ENCODE measurements at regions of chr2 and their contacts with region 1.

Region 1: GRCh38 chr2:190880378-190881073 is at the start of gene GLS:
- DNase-seq: peak; percentile 98
- H3K4me3 Mint-ChIP-seq: peak within 1 kb of the TSS; percentile 98
- H3K27ac Mint-ChIP-seq: peak within 1 kb of the TSS; percentile 99
- H3K4me1 Mint-ChIP-seq: peaks cover 36% of the 10 kb centered on the region
- H3K27me3 Mint-ChIP-seq: peaks cover 4% of the 10 kb centered on the region
- total RNA-seq, gene GLS: 209 to 210 TPM

Region 2: DNA sequence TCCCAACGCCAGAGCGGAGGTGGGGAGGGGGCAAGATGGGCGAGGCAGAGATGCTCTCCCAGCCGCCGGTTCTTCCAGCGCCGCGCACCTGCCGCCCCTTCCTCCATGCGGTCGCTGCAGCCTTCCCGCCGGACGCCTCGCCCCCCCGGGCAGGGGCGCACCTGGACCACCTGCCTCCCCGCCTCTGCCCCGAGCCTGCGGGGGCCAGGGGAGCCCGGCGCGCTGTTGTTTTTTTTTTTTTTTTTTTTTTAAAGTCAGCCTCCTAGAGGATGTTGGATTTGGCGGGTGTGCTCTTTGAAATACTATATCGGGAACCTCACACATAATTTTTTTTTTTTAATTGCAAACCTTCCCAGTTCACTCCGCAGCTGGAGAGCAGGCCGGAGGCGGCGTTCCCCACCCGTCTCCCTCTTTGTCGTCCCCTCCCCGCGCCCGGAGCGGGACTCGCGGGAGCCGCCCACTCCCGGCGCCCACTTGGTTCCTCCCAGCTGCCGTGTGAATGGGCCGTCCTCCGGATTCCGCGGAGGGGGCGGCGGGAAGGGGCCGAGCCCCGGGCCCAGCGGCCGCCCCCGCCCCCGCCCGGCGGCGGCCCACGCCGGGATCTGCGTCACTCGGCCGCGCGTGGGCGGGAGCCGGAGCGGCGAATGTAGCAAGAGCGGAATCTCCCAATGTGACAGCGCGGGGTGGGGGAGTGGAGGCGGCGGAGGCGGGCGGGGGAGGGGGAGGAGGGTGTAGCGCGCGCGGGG is 232.1 kb before region 1 on chr2:
- CTCF ChIA-PET with region 1: no interaction called
- POLR2A ChIA-PET with region 1: interaction called, 3 read pairs
- intact Hi-C with region 1: loop called (anchors 1 kb)
- DNase-seq: peak; percentile 85
- H3K4me3 Mint-ChIP-seq: peak overlapping the region; percentile 75
- H3K27ac Mint-ChIP-seq: peak overlapping the region; percentile 82
- H3K4me1 Mint-ChIP-seq: peaks cover 38% of the 10 kb centered on the region
- H3K27me3 Mint-ChIP-seq: no peaks in the 10 kb centered on the region

Region 3: DNA sequence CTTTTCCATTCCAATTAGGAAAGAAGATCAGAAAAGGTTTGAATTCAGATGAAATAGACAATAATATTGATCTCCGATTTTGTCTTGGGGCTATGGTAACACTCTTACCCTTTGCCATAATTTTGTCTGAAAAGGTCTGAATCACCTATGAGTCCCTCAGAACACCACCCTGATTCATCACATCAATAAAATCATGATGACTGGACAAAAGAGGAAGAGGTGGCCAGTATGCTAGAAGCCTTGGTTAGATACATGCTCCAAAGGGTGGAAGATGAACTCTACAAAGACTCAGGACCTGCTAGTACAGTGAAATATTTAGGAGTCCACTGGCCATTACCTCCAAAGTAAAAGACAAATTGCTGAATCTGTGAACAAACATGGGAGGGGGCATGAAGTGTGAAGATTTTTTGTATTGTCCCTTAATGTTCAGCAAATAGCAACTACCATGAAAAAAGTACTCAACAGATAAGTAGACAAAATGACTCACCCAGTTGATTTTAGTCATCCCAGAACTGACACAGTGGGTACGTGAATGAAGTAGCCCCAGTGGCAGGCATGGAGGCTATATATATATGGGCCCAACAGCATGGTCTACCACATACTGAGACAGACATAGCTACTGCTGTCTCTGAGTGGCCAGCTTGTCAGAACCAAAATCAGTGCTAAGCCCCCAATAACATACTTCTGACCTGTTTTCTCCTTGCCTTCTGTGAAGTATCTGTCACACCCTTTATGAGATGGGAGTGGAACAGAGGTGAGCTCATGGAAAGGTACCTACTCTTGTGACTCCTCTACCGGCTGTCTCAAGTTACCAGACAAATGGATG is 36.4 kb before region 1 on chr2:
- CTCF ChIA-PET with region 1: no interaction called
- POLR2A ChIA-PET with region 1: interaction called, 22 read pairs
- intact Hi-C with region 1: loop called (anchors 1 kb)
- DNase-seq: peak; percentile 78
- H3K4me3 Mint-ChIP-seq: peak overlapping the region; percentile 30
- H3K27ac Mint-ChIP-seq: peak overlapping the region; percentile 92
- H3K4me1 Mint-ChIP-seq: peaks cover 39% of the 10 kb centered on the region
- H3K27me3 Mint-ChIP-seq: peaks cover 1% of the 10 kb centered on the region

Region 4: GRCh38 chr2:190911813-190912212 is 31.3 kb after region 1 on chr2:
- CTCF ChIA-PET with region 1: no interaction called
- POLR2A ChIA-PET with region 1: interaction called, 5 read pairs
- intact Hi-C with region 1: loop called (anchors 1 kb)
- DNase-seq: no peak
- H3K4me3 Mint-ChIP-seq: no peak overlapping the region
- H3K27ac Mint-ChIP-seq: peak overlapping the region; percentile 54
- H3K4me1 Mint-ChIP-seq: peaks cover 38% of the 10 kb centered on the region
- H3K27me3 Mint-ChIP-seq: no peaks in the 10 kb centered on the region

Region 5: GRCh38 chr2:191059308-191059707 is 178.8 kb after region 1 on chr2:
- CTCF ChIA-PET with region 1: no interaction called
- POLR2A ChIA-PET with region 1: no interaction called
- intact Hi-C with region 1: no loop called
- DNase-seq: no peak
- H3K4me3 Mint-ChIP-seq: no peak overlapping the region
- H3K27ac Mint-ChIP-seq: peak overlapping the region; percentile 10
- H3K4me1 Mint-ChIP-seq: peaks cover 68% of the 10 kb centered on the region
- H3K27me3 Mint-ChIP-seq: no peaks in the 10 kb centered on the region

Region 6: DNA sequence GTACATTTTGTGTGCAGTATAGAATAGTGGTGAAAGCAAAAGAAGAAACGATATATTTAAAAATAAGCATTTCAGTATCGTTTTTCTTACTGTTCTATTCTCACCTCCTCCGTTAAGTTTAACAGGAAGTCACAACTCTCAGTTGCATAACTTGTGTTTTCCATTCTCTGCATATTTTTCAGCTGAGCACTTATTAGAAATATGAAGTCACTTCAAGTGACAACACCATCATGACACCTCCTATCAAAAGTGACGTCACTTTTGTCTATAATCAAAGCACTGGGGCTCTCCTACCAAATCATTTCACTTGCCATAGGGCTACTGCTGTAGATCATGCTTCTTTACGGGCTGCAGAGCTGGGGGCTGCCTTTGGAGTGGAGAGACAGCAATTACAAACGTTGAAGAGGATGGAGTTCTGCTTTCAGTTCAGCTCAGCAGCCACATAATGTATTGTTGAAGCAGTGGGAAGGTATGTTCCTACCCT is 233.9 kb after region 1 on chr2:
- CTCF ChIA-PET with region 1: no interaction called
- POLR2A ChIA-PET with region 1: interaction called, 3 read pairs
- intact Hi-C with region 1: loop called (anchors 1 kb)
- DNase-seq: peak; percentile 57
- H3K4me3 Mint-ChIP-seq: peak overlapping the region; percentile 66
- H3K27ac Mint-ChIP-seq: peak overlapping the region; percentile 88
- H3K4me1 Mint-ChIP-seq: peaks cover 70% of the 10 kb centered on the region
- H3K27me3 Mint-ChIP-seq: no peaks in the 10 kb centered on the region

Region 7: GRCh38 chr2:191677646-191678436 is 797.3 kb after region 1 on chr2 and contains the start of gene NABP1:
- CTCF ChIA-PET with region 1: no interaction called
- POLR2A ChIA-PET with region 1: interaction called, 3 read pairs
- intact Hi-C with region 1: loop called (anchors 1 kb)
- DNase-seq: peak; percentile 99
- H3K4me3 Mint-ChIP-seq: peak within 1 kb of the TSS; percentile 96
- H3K27ac Mint-ChIP-seq: peak within 1 kb of the TSS; percentile 99
- H3K4me1 Mint-ChIP-seq: peaks cover 46% of the 10 kb centered on the region
- H3K27me3 Mint-ChIP-seq: peaks cover 2% of the 10 kb centered on the region
- total RNA-seq, gene NABP1: 65.1 to 65.4 TPM

Measured in activated CD4-positive, alpha-beta memory T cell treated with anti-CD3 and anti-CD28 coated beads for 36 hours (primary cell).